Activated B cell treated with CpG ODN at 0.5 μM for 24 hours (primary cell): ENCODE measurements at regions of chr17 and their contacts with region 1.

Region 1: DNA sequence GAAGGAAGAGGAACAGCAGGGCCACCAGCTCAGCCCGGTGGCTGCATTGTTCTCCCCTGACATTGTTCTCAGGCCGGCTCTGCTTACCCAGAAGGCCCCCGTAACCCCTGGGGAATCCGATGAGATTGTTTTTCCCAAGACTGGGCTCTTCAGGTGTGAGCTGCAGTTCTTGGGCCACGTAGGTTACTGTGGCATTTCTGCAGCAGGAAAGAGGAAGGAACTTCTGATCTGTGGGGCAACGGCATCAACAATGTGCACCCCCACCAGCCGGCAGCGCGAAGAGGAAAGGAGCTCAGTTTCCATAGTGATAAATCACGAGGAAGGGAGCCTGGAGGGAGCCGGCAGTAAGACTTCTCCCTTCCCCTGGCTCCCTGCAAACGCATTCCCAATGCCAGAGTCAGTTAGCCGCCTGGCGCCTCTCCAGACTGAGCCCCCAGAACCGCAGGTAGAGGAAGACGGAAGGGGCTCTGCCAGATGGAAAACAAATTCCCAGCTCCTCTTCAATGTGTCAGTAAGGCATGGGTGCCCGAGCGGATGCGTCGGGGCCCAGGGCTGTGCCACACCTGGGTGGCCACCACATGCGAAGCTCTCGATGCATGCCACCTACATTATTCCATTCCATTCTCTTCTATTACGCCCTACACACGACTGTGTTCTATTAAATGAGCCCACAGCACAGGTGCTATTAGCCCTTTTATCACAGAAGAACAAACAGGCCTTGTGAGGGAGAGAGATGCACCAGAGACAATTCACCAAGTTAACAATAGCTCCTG is 21.5 kb upstream of the PECAM1 start:
- DNase-seq: peak; percentile 48
- ATAC-seq: peak; percentile 65
- H3K4me3 Mint-ChIP-seq: peak overlapping the region; percentile 83
- H3K27ac Mint-ChIP-seq: peak overlapping the region; percentile 94
- H3K4me1 Mint-ChIP-seq: peaks cover 57% of the 10 kb centered on the region
- H3K27me3 Mint-ChIP-seq: no peaks in the 10 kb centered on the region
- CTCF ChIP-seq: no peak

Region 2: GRCh38 chr17:63974594-63975192 is 437.5 kb before region 1 on chr17:
- CTCF ChIA-PET with region 1: no interaction called
- POLR2A ChIA-PET with region 1: no interaction called
- intact Hi-C with region 1: no loop called
- DNase-seq: no peak
- ATAC-seq: no peak
- H3K4me3 Mint-ChIP-seq: no peak overlapping the region
- H3K27ac Mint-ChIP-seq: no peak overlapping the region
- H3K4me1 Mint-ChIP-seq: peaks cover 4% of the 10 kb centered on the region
- H3K27me3 Mint-ChIP-seq: peaks cover 24% of the 10 kb centered on the region
- CTCF ChIP-seq: no peak

Region 3: DNA sequence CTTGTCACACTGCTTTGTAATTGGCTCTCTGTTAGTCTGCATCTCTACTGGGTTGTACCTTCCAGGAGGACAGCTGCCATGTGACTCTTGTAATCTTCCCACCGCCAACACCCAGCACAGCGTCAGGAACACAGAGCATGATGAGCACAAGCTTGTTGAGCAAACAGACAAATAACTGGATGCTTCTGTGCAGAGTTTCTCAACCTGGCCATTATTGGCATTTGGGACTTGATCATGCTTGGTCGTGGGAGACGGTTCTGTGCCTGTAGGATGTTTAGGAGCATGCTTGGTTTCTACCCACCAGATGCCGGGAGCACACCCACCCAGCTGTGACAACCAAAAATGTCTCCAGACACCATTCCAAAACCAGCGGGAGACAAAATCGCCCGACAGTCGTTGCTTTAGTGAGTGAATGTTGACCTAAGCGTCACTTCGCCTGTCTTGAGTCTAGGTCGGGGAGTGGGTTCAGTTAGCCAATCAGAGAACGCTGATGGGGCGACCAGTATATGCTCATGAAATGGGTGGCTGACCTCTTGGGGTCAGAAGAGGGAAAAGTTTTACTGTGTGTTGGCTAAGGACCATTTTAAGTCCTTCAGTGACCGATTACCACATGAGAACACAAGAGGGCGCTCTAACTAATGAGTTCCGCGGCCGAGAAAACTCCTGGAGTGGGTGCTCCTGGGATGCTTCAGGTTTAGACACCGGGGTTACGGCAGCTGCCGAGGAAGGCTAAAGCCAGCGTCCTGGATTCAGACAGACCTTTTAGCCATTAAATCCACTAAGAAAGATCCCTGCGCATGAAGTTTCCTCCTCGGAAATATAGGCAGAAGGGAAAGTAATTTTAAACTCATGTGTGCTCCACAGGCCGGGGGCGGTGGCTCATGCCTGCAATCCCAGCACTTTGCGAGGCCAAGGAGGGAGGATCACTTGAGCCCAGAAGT is 91.3 kb before region 1 on chr17:
- CTCF ChIA-PET with region 1: interaction called, 170 read pairs
- POLR2A ChIA-PET with region 1: interaction called, 4 read pairs
- intact Hi-C with region 1: loop called (anchors 2 kb)
- DNase-seq: peak; percentile 21
- ATAC-seq: no peak
- H3K4me3 Mint-ChIP-seq: peak overlapping the region; percentile 55
- H3K27ac Mint-ChIP-seq: no peak overlapping the region
- H3K4me1 Mint-ChIP-seq: peaks cover 43% of the 10 kb centered on the region
- H3K27me3 Mint-ChIP-seq: peaks cover 2% of the 10 kb centered on the region
- CTCF ChIP-seq: no peak

Region 4: DNA sequence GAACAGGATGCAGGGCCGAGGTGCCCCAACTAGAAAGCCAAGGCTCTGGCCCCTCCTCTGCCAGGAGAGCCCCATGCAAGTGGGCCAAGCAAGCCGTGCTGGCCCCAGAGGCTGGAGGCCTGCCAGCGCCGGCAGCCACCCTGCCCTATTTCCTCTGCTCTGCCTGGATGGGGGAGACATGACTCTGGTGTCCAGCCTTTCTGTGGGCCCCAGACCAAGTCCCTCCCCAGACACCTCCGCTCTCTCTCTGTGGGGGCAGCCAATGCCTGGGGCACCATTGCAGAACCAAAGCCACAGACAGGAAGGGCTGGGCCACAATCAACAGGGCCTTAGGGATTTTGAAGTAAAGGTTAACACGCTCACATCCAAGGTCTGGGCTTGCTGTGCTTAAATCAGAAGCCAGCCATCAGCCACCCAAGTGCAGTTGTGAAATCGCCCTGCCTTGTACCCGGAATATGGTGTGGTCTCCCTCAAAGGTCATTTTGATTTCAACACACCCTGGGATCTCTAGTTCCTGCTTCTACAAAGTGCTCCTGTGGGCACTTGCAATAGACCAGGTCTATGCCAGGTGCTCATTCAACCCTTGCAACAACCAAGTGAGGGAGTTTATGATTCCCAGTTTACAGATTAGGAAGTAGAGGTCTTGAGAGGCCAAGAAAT is 85.7 kb before region 1 on chr17:
- CTCF ChIA-PET with region 1: interaction called, 170 read pairs
- POLR2A ChIA-PET with region 1: interaction called, 4 read pairs
- intact Hi-C with region 1: loop called (anchors 2 kb)
- DNase-seq: peak; percentile 26
- ATAC-seq: peak; percentile 88
- H3K4me3 Mint-ChIP-seq: peak overlapping the region; percentile 32
- H3K27ac Mint-ChIP-seq: no peak overlapping the region
- H3K4me1 Mint-ChIP-seq: peaks cover 48% of the 10 kb centered on the region
- H3K27me3 Mint-ChIP-seq: no peaks in the 10 kb centered on the region
- CTCF ChIP-seq: no peak

Region 5: DNA sequence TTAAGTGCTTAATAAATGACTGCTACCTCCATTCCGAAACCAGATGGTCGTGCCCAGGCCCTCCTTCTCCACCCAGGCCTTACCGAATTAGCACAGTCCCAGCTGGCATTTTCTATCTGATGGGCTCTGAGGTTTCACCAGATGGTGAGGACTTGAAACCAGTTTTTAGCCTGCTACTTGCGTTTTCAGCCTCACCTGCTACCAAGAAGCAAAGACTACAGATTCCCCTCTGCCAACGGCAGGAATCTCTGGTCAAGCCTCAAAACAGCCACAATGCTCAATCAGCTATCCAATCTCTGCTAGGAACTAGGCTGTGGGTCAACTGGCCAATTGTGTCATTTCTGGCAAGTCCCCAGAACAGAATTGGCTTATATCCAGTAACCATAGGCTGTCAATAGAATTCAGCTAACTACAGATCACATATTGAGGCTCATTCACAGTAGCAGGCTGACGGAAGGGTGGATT is 33.3 kb before region 1 on chr17:
- CTCF ChIA-PET with region 1: no interaction called
- POLR2A ChIA-PET with region 1: no interaction called
- intact Hi-C with region 1: loop called (anchors 5 kb)
- DNase-seq: no peak
- ATAC-seq: no peak
- H3K4me3 Mint-ChIP-seq: no peak overlapping the region
- H3K27ac Mint-ChIP-seq: no peak overlapping the region
- H3K4me1 Mint-ChIP-seq: no peaks in the 10 kb centered on the region
- H3K27me3 Mint-ChIP-seq: no peaks in the 10 kb centered on the region
- CTCF ChIP-seq: no peak

Region 6: GRCh38 chr17:64399071-64399766 is 13.0 kb before region 1 on chr17:
- CTCF ChIA-PET with region 1: interaction called, 6 read pairs
- POLR2A ChIA-PET with region 1: interaction called, 23 read pairs
- intact Hi-C with region 1: loop called (anchors 1 kb)
- DNase-seq: no peak
- ATAC-seq: no peak
- H3K4me3 Mint-ChIP-seq: no peak overlapping the region
- H3K27ac Mint-ChIP-seq: no peak overlapping the region
- H3K4me1 Mint-ChIP-seq: peaks cover 75% of the 10 kb centered on the region
- H3K27me3 Mint-ChIP-seq: no peaks in the 10 kb centered on the region
- CTCF ChIP-seq: no peak

Region 7: DNA sequence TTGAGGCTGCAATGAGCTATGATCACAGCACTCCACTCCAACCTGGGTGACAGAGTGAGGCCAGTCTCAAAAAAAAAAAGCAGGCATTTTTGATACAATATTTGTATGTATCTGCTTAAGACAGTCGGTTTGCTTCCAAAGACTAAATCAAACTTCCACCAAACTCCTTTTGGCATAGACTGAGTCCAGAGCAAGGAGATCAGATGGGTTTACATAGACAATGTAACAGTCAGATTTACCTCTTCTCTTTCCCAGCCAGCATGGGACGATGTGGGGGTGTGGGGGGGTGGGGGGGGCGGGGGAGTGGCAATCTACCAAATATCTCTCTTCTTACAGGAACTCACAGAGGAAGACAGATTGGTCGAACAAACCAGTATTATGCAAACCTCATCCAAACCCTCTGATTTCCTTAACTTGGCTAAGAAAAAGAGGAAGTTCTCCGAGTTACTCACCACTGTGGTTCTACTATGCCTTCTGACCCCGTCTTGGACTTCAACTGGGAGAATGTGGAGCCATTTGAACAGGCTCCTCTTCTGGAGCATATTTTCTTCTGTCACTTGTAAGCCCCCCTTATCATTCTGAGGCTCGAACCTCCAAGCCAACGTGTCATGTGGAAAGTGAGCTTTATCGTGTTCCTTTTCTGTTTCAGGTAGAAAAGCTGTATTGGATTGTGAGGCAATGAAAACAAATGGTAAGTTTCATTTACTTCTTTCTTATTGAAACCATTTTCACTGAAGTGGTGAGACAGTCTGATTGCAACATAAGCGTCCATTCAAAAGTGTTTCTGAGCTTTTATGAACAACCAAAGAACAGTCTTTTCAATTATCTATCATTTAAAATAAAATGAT is 36.7 kb after region 1 on chr17 and contains the start of gene MILR1:
- CTCF ChIA-PET with region 1: no interaction called
- POLR2A ChIA-PET with region 1: no interaction called
- intact Hi-C with region 1: no loop called
- DNase-seq: no peak
- ATAC-seq: peak; percentile 98
- H3K4me3 Mint-ChIP-seq: peak within 1 kb of the TSS; percentile 85
- H3K27ac Mint-ChIP-seq: peak within 1 kb of the TSS; percentile 95
- H3K4me1 Mint-ChIP-seq: peaks cover 44% of the 10 kb centered on the region
- H3K27me3 Mint-ChIP-seq: no peaks in the 10 kb centered on the region
- CTCF ChIP-seq: no peak
- total RNA-seq, gene MILR1: 13.5 and 13.9 TPM in 2 replicates